Caco-2 (cell line): ENCODE measurements at regions of chr15 and their contacts with region 1.

Region 1: DNA sequence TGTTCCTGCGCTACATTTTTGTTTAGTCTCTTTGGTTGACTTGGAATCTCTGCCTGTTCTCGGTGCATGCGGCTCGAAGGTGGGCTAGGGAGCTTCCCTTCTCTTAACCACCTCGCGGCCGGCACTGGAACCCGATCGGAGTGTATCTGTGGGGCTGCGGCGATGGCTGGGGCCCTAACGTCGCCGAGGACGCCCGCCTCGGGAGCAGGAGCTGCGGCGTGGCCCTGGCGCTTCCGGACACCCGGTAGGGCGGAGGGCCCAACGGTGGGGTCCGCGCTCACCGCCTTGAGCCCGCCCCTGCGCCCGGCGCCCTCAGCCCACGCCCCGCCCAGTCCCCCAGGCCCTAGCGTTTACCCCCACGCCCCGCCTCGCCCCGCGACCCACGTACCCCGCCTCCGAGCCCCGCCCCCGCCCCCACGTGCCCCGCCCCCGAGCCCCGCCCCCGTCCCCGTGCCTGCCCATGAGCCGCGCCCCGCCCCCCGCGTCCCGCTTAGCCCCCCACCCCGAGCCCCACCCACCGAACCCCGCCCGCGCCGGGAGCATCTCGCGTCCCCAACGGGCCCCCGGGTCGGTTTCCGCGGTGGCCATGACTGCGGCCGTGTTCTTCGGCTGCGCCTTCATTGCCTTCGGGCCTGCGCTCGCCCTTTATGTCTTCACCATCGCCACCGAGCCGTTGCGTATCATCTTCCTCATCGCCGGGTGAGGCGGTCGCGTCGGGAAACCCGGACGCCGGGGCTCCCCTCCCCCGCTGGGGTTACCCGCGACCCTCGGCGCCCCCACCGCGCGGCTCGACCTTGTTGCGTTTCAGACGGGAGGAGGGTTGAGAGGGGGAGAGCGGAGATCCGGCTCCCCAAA is at the start of gene APH1B:
- DNase-seq: peak; percentile 86 to 88
- H3K4me3 ChIP-seq: peak within 1 kb of the TSS; percentile 76
- H3K4me3 Mint-ChIP-seq: peak within 1 kb of the TSS; percentile 81
- H3K27ac Mint-ChIP-seq: peak within 1 kb of the TSS; percentile 42
- H3K4me1 ChIP-seq: no peaks in the 10 kb centered on the region
- H3K4me1 Mint-ChIP-seq: peaks cover 19% of the 10 kb centered on the region
- H3K27me3 ChIP-seq: no peaks in the 10 kb centered on the region
- H3K27me3 Mint-ChIP-seq: no peaks in the 10 kb centered on the region
- CTCF ChIP-seq: no peak
- total RNA-seq, gene APH1B: 17.3 and 20.3 TPM in 2 replicates

Region 2: GRCh38 chr15:63188926-63189871 is 88.1 kb before region 1 on chr15 and contains the start of gene RAB8B:
- CTCF ChIA-PET with region 1: no interaction called
- POLR2A ChIA-PET with region 1: interaction called, 3 read pairs
- intact Hi-C with region 1: loop called (anchors 1 kb)
- DNase-seq: peak; percentile 96 to 97
- H3K4me3 ChIP-seq: peak within 1 kb of the TSS; percentile 88
- H3K4me3 Mint-ChIP-seq: peak within 1 kb of the TSS; percentile 77
- H3K27ac Mint-ChIP-seq: peak within 1 kb of the TSS; percentile 5
- H3K4me1 ChIP-seq: 0 out of 2 replicates have a peak, but pooled peaks cover 7% of the 10 kb centered on the region
- H3K4me1 Mint-ChIP-seq: peaks cover 24% of the 10 kb centered on the region
- H3K27me3 ChIP-seq: no peaks in the 10 kb centered on the region
- H3K27me3 Mint-ChIP-seq: no peaks in the 10 kb centered on the region
- CTCF ChIP-seq: no peak
- total RNA-seq, gene RAB8B: 17.3 and 18.2 TPM in 2 replicates